ENCODE measurements at regions of chr19 and their contacts with region 1.

Region 1: DNA sequence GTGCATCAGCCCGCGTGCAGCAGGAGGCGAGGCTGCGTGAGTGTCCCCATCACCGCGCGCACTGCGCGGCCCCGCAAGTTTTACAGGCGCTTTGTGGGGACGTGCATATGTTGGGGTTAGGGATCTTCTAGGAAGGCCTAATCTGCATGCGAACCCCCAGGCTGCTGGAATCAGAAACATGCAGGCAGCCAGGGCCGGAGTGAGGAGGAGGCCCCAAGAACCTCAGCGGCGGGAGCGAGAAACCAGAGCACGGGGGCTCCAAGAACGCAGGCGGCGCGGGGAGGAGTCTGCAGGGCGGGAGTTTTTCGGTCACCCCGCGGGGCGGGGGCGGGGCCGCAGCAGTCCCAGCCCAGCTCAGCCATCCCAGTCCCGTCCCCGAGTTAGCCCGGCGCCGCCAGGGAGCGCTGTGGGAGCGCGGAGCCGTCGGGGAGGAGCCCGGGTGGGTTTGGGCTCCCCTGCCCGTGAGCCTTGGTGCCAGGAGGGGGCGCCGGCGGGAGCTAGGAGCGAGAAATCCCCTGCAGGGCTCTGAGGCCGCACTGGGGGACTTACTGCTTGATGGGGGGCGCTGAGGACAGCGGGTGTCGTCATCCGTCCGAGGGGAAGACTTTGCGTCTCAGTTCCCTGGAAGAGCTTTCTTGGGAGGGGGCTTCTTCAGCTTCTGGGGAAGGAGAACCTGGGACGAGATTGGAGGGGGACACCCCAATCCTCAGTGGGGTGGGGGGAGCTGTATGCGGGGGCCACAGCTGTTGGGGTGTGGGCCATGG is 933 bp upstream of the NRTN start:
- DNase-seq: peak; percentile 97
- CTCF ChIP-seq: peak; percentile 95

Region 2: GRCh38 chr19:5707576-5708575 is 96.1 kb before region 1 on chr19:
- in situ Hi-C with region 1: no loop called
- DNase-seq: peak; percentile 35
- CTCF ChIP-seq: no peak

Region 3: GRCh38 chr19:6021878-6022569 is 218.1 kb after region 1 on chr19:
- in situ Hi-C with region 1: loop called (anchors 10 kb)
- DNase-seq: peak; percentile 92
- CTCF ChIP-seq: peak; percentile 79

Measured in GM13976 (cell line).